Activated CD4-positive, alpha-beta memory T cell treated with anti-CD3 and anti-CD28 coated beads, Interleukin-2, amount 10 ng/mL, durations not matched to agents 7 days and 5 days (primary cell): ENCODE measurements at regions of chr3 and their contacts with region 1.

Region 1: DNA sequence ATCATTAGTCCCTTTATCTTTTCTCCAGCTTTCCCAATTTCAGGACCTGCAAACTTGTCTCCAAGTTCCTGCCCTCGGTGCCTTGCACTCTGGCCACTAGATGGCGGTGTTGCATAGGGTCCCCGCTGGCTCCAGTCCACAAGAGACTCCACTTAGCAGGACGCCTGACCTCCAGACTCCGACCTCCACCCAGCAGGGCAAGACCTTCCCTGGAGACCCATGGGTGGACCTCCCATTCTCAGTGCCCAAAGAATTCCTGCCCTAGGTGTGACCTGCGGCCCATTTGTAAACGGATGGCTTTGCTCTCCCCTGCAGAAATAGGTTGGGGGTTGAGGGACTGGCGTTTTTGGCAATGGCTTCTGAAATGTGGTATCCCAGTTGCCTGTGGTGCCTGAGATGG is 82.6 kb downstream of the LSM3 start:
- DNase-seq: peak; percentile 77
- H3K4me3 Mint-ChIP-seq: no peak overlapping the region
- H3K27ac Mint-ChIP-seq: no peak overlapping the region
- H3K4me1 Mint-ChIP-seq: peaks cover 4% of the 10 kb centered on the region
- H3K27me3 Mint-ChIP-seq: peaks cover 27% of the 10 kb centered on the region

Region 2: GRCh38 chr3:14467814-14468620 is 206.8 kb after region 1 on chr3:
- CTCF ChIA-PET with region 1: interaction called, 22 read pairs
- POLR2A ChIA-PET with region 1: no interaction called
- DNase-seq: peak; percentile 46
- H3K4me3 Mint-ChIP-seq: no peak overlapping the region
- H3K27ac Mint-ChIP-seq: no peak overlapping the region
- H3K4me1 Mint-ChIP-seq: peaks cover 5% of the 10 kb centered on the region
- H3K27me3 Mint-ChIP-seq: no peaks in the 10 kb centered on the region